GM10248 (cell line): ENCODE measurements at regions of chr9 and their contacts with region 1.

Region 1: DNA sequence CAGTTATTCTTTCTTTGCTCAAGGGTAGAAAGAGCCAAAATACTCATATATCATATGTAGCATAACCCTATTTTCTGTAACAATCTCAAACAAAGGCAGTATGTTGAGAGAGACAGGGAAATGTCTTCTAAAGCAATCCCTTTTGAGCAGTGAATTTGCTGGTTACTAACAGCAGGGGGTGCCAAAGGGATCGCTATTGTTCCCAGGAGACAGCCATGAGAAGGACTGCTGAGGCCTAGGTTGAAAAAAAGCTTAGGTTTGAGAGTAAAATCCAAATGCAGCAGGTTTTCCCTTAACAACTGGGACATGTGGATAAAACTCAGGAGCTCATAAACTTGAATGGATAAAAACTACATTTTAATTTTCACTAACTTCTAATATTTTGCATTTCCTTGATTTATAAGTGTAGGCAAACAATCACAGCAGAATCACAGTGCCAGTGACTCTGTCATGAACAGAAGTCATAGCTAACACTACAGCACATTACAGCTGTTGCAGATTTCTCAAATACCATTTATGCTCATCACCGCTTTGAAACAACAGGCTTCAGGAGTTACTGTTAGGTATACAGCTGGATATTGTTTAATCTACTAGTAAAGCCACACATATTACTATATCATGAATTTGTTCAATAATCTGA is 148.4 kb downstream of the MAPKAP1 start:
- DNase-seq: peak; percentile 69
- CTCF ChIP-seq: peak; percentile 77

Region 2: GRCh38 chr9:125513668-125514413 is 44.7 kb before region 1 on chr9:
- CTCF ChIA-PET with region 1: interaction called, 10 read pairs
- POLR2A ChIA-PET with region 1: no interaction called
- DNase-seq: peak; percentile 66
- CTCF ChIP-seq: no peak

Region 3: DNA sequence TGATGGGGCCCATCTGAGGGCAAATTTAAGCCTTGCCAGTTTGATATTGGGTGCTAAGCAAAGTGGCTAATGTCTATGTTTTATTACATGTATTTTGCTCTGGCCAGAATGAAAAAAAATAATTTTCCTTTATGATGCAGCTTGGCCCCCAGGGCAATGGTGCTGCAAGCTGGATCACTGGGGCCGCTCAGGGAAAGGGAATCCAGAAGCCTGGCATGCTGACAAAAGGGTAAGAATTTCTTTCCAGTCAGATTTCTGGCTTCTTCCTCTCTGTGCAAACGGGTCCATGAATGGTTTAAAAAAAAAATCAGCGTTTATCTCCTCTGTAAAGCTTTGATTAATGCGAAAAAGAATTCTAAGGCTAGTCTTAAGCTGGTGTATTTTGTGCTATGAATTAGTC is 10.0 kb after region 1 on chr9:
- CTCF ChIA-PET with region 1: interaction called, 45 read pairs
- POLR2A ChIA-PET with region 1: no interaction called
- DNase-seq: no peak
- CTCF ChIP-seq: no peak

Region 4: DNA sequence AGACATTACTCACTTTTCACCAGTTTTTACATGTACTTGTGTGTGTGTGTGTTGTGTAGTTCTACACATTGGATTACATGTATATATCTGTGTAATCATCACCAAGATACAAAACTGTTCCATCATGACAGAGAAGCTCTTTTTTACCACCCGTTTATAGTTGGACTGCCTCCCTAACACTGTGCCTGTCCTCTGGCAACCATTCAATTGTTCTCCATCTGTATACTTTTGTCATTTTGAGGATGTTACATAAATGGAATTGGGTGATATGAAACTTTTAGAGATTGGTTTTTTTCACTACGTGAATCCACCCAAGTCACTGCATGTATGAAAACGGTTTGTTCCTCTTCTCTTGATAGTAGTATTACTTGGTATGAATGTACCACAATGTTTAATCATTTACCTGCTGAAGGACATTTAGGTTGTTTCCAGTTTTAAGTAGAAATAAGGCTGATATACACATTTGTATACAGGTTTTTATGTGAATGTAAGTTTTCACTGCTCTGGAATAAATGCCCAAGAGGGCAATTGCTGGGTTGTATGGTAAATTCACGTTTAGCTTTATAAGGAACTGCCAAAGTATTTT is 22.2 kb after region 1 on chr9:
- CTCF ChIA-PET with region 1: interaction called, 17 read pairs
- POLR2A ChIA-PET with region 1: no interaction called
- DNase-seq: no peak
- CTCF ChIP-seq: no peak

Region 5: GRCh38 chr9:125631391-125632085 is 73.0 kb after region 1 on chr9:
- CTCF ChIA-PET with region 1: interaction called, 18 read pairs
- POLR2A ChIA-PET with region 1: no interaction called
- DNase-seq: peak; percentile 57
- CTCF ChIP-seq: peak; percentile 49